ENCODE measurements at regions of chr4 and their contacts with region 1.

Region 1: GRCh38 chr4:173334085-173334772 is at the start of gene HMGB2:
- DNase-seq: peak; percentile 100
- H3K4me3 Mint-ChIP-seq: peak within 1 kb of the TSS; percentile 95
- H3K27ac Mint-ChIP-seq: peak within 1 kb of the TSS; percentile 100
- H3K4me1 Mint-ChIP-seq: peaks cover 11% of the 10 kb centered on the region
- H3K27me3 Mint-ChIP-seq: peaks cover 4% of the 10 kb centered on the region
- total RNA-seq, gene HMGB2: 610 to 614 TPM

Region 2: DNA sequence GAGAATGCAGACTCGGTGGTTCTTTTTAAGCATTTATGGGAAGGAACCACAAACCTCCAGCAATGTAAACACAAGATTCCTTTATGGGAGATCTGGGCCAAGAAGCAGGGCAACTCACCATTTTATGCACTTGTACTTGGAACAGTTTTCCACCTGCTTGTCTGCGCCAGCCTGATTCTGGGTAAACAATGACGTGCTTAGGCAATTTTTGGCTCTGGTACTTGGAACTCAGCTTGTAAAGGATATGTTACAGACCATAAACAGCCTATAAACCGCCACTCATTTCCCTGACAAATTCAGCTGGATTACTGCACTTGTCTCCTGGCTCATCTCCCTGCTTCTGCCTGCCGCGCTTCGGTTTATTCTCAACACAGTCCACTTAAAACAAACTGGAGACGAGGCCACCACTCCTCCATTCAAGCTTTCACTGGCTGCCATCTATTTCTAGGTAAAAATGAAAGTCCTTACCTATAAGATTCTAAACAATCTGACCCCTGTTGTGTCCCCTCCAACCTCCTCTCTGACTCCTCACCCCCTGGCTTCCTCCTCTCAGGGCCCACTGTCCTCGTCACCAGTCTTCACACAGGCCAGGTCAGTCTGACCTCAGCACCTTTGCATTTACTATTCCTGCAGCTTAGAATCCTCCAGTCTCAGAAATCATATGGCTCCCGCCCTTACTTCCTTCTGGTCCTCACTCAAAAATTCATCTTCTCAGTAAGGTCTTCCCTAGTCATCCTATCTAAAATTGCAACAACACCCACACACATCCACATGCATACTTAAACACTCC is 371.5 kb before region 1 on chr4:
- CTCF ChIA-PET with region 1: no interaction called
- POLR2A ChIA-PET with region 1: no interaction called
- intact Hi-C with region 1: no loop called
- DNase-seq: no peak
- H3K4me3 Mint-ChIP-seq: no peak overlapping the region
- H3K27ac Mint-ChIP-seq: no peak overlapping the region
- H3K4me1 Mint-ChIP-seq: no peaks in the 10 kb centered on the region
- H3K27me3 Mint-ChIP-seq: peaks cover 18% of the 10 kb centered on the region

Region 3: GRCh38 chr4:173168396-173169177 is 165.6 kb before region 1 on chr4 and contains the start of gene GALNT7:
- CTCF ChIA-PET with region 1: interaction called, 3 read pairs
- POLR2A ChIA-PET with region 1: interaction called, 12 read pairs
- intact Hi-C with region 1: loop called (anchors 1 kb)
- DNase-seq: peak; percentile 79
- H3K4me3 Mint-ChIP-seq: peak within 1 kb of the TSS; percentile 91
- H3K27ac Mint-ChIP-seq: peak within 1 kb of the TSS; percentile 84
- H3K4me1 Mint-ChIP-seq: peaks cover 39% of the 10 kb centered on the region
- H3K27me3 Mint-ChIP-seq: no peaks in the 10 kb centered on the region
- total RNA-seq, gene GALNT7: 14.4 to 16.0 TPM

Region 4: GRCh38 chr4:173301518-173302201 is 32.6 kb before region 1 on chr4:
- CTCF ChIA-PET with region 1: interaction called, 12 read pairs
- POLR2A ChIA-PET with region 1: interaction called, 4 read pairs
- intact Hi-C with region 1: no loop called
- DNase-seq: no peak
- H3K4me3 Mint-ChIP-seq: no peak overlapping the region
- H3K27ac Mint-ChIP-seq: no peak overlapping the region
- H3K4me1 Mint-ChIP-seq: peaks cover 3% of the 10 kb centered on the region
- H3K27me3 Mint-ChIP-seq: no peaks in the 10 kb centered on the region

Region 5: GRCh38 chr4:173370477-173371291 is 36.5 kb after region 1 on chr4 and contains the start of gene SAP30:
- CTCF ChIA-PET with region 1: interaction called, 7 read pairs
- POLR2A ChIA-PET with region 1: interaction called, 117 read pairs
- intact Hi-C with region 1: loop called (anchors 1 kb)
- DNase-seq: peak; percentile 99
- H3K4me3 Mint-ChIP-seq: peak within 1 kb of the TSS; percentile 100
- H3K27ac Mint-ChIP-seq: peak within 1 kb of the TSS; percentile 99
- H3K4me1 Mint-ChIP-seq: peaks cover 33% of the 10 kb centered on the region
- H3K27me3 Mint-ChIP-seq: peaks cover 4% of the 10 kb centered on the region
- total RNA-seq, gene SAP30: 26.1 to 26.5 TPM

Region 6: GRCh38 chr4:173386751-173387150 is 52.5 kb after region 1 on chr4:
- CTCF ChIA-PET with region 1: no interaction called
- POLR2A ChIA-PET with region 1: no interaction called
- intact Hi-C with region 1: no loop called
- DNase-seq: no peak
- H3K4me3 Mint-ChIP-seq: no peak overlapping the region
- H3K27ac Mint-ChIP-seq: no peak overlapping the region
- H3K4me1 Mint-ChIP-seq: no peaks in the 10 kb centered on the region
- H3K27me3 Mint-ChIP-seq: peaks cover 3% of the 10 kb centered on the region

Region 7: GRCh38 chr4:173405840-173406606 is 71.8 kb after region 1 on chr4:
- CTCF ChIA-PET with region 1: no interaction called
- POLR2A ChIA-PET with region 1: interaction called, 5 read pairs
- intact Hi-C with region 1: loop called (anchors 2 kb)
- DNase-seq: no peak
- H3K4me3 Mint-ChIP-seq: no peak overlapping the region
- H3K27ac Mint-ChIP-seq: no peak overlapping the region
- H3K4me1 Mint-ChIP-seq: peaks cover 11% of the 10 kb centered on the region
- H3K27me3 Mint-ChIP-seq: no peaks in the 10 kb centered on the region

Region 8: GRCh38 chr4:173494013-173494970 is 160.1 kb after region 1 on chr4:
- CTCF ChIA-PET with region 1: no interaction called
- POLR2A ChIA-PET with region 1: no interaction called
- intact Hi-C with region 1: loop called (anchors 1 kb)
- DNase-seq: peak; percentile 72
- H3K4me3 Mint-ChIP-seq: peak overlapping the region; percentile 77
- H3K27ac Mint-ChIP-seq: no peak overlapping the region
- H3K4me1 Mint-ChIP-seq: peaks cover 14% of the 10 kb centered on the region
- H3K27me3 Mint-ChIP-seq: peaks cover 21% of the 10 kb centered on the region

Region 9: DNA sequence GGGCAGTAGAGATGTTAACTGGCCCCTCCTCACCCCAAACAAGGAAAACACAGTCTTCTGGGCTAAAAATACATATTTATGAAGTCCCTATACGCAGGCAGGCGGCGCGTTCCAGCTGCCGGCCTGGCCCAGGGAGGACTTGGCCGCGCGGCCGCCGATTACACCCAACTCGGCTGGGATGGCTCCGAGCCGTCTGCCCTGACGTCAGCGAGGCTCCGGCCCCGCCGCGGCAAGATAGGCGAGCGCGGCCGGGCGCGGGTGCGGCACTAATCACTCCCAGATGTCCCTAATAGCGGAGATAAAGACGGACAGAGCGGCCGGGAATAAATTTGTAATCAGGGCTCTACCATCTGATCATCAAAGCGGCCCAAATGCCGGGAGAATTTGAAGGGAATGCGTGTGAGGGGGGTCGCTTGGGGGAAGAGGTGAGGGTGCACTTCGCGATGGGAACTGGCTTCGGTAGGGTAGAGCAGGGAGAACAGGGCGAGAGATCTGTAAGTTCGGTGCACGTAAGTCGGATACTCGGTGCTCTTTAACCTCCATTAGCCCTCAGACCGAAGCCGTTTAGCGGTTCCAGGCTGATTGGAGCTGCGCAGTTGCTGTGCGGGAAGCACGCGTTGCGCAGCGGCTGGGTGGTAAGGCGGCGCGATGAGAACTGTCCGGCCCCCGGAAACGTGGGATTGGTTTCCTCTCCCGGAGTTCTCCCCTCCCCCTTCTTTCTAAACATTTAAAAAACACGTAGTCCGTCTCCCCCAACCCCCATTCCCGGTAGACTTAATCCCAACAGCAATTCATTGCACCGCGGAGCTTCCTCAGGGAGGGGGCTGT is 188.1 kb after region 1 on chr4:
- CTCF ChIA-PET with region 1: no interaction called
- POLR2A ChIA-PET with region 1: no interaction called
- intact Hi-C with region 1: no loop called
- DNase-seq: no peak
- H3K4me3 Mint-ChIP-seq: peak overlapping the region; percentile 18
- H3K27ac Mint-ChIP-seq: no peak overlapping the region
- H3K4me1 Mint-ChIP-seq: peaks cover 15% of the 10 kb centered on the region
- H3K27me3 Mint-ChIP-seq: peaks cover 92% of the 10 kb centered on the region

Region 10: GRCh38 chr4:174282836-174283506 is 948.7 kb after region 1 on chr4:
- CTCF ChIA-PET with region 1: no interaction called
- POLR2A ChIA-PET with region 1: no interaction called
- intact Hi-C with region 1: loop called (anchors 1 kb)
- DNase-seq: peak; percentile 86
- H3K4me3 Mint-ChIP-seq: peak overlapping the region; percentile 97
- H3K27ac Mint-ChIP-seq: peak overlapping the region; percentile 99
- H3K4me1 Mint-ChIP-seq: peaks cover 62% of the 10 kb centered on the region
- H3K27me3 Mint-ChIP-seq: no peaks in the 10 kb centered on the region